ENCODE measurements at regions of chr17 and their contacts with region 1.

Region 1: GRCh38 chr17:2511462-2512369 is at the start of gene METTL16:
- DNase-seq: peak; percentile 96 to 100
- H3K4me3 ChIP-seq: peak within 1 kb of the TSS; percentile 65 to 79
- H3K27ac ChIP-seq: peak within 1 kb of the TSS; percentile 88 to 91
- H3K4me1 ChIP-seq: peaks cover 9 to 14% of the 10 kb centered on the region in 2 donors
- H3K27me3 ChIP-seq: no peaks in the 10 kb centered on the region
- CTCF ChIP-seq: no peak
- total RNA-seq, gene METTL16: 15.3 TPM

Region 2: GRCh38 chr17:2239882-2240430 is 271.8 kb before region 1 on chr17:
- intact Hi-C with region 1: no loop called
- DNase-seq: peak in 1 of 2 donors; percentile 80
- H3K4me3 ChIP-seq: no peak overlapping the region
- H3K27ac ChIP-seq: peak overlapping the region in 1 of 2 donors; percentile 59
- H3K4me1 ChIP-seq: peaks cover 10 to 54% of the 10 kb centered on the region in 2 donors
- H3K27me3 ChIP-seq: no peaks in the 10 kb centered on the region
- CTCF ChIP-seq: no peak

Region 3: GRCh38 chr17:2571523-2572303 is 60.0 kb after region 1 on chr17:
- intact Hi-C with region 1: no loop called
- DNase-seq: no peak
- H3K4me3 ChIP-seq: no peak overlapping the region
- H3K27ac ChIP-seq: no peak overlapping the region
- H3K4me1 ChIP-seq: no peaks in the 10 kb centered on the region
- H3K27me3 ChIP-seq: no peaks in the 10 kb centered on the region
- CTCF ChIP-seq: no peak

Region 4: GRCh38 chr17:2672026-2672425 is 160.3 kb after region 1 on chr17:
- intact Hi-C with region 1: loop called (anchors 10 kb)
- DNase-seq: no peak
- H3K4me3 ChIP-seq: no peak overlapping the region
- H3K27ac ChIP-seq: no peak overlapping the region
- H3K4me1 ChIP-seq: no peaks in the 10 kb centered on the region
- H3K27me3 ChIP-seq: no peaks in the 10 kb centered on the region
- CTCF ChIP-seq: no peak

Region 5: DNA sequence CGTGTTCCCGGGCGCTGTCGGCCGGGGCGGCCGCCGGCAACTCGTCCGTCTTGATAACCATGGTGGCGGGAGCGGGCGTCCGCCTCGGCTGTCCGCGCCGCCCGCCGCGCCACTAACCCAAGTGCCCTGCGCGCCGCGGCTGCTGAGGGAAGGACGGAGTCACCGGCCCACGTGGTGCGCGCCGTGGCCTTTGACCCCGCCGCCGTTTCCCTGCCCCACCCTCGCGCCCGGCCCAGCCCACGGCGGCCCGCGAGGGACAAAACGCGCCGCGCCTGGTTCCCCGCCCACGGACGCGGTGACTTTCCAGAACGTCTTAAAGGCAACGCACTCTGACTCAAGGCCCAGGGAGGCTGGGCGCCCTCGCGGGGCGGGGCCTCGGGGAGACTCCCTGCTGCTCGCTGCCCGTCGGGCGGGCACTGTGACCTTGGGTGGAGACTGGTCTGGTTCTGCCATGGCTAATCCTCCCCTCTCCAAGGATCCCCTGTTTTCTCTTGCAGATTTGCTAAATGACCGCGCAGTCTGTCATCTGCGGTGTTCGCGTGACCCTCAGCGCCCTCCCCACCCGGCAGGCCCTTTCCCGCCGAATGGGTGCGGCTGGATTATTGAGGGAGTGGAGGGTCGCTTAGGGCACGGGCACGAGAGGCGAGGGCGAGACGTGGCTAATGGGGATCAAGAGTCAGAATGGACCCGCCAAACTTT is 200.0 kb after region 1 on chr17 and contains the start of gene CLUH:
- intact Hi-C with region 1: loop called (anchors 2 kb)
- DNase-seq: peak; percentile 92 to 98
- H3K4me3 ChIP-seq: peak within 1 kb of the TSS; percentile 77 to 95
- H3K27ac ChIP-seq: peak within 1 kb of the TSS; percentile 56 to 71
- H3K4me1 ChIP-seq: peaks cover 24 to 44% of the 10 kb centered on the region in 2 donors
- H3K27me3 ChIP-seq: no peaks in the 10 kb centered on the region
- CTCF ChIP-seq: no peak
- total RNA-seq, gene CLUH: 58.1 TPM